ENCODE measurements at regions of chr1 and their contacts with region 1.

Region 1: GRCh38 chr1:112369392-112370285 is 26.4 kb upstream of the CTTNBP2NL start:
- DNase-seq: peak; percentile 90
- H3K4me3 Mint-ChIP-seq: no peak overlapping the region
- H3K27ac Mint-ChIP-seq: no peak overlapping the region
- H3K4me1 Mint-ChIP-seq: peaks cover 3% of the 10 kb centered on the region
- H3K27me3 Mint-ChIP-seq: peaks cover 30% of the 10 kb centered on the region

Region 2: GRCh38 chr1:112298558-112298957 is 71.1 kb before region 1 on chr1:
- CTCF ChIA-PET with region 1: interaction called, 21 read pairs
- POLR2A ChIA-PET with region 1: no interaction called
- intact Hi-C with region 1: loop called (anchors 2 kb)
- DNase-seq: peak; percentile 55
- H3K4me3 Mint-ChIP-seq: no peak overlapping the region
- H3K27ac Mint-ChIP-seq: no peak overlapping the region
- H3K4me1 Mint-ChIP-seq: no peaks in the 10 kb centered on the region
- H3K27me3 Mint-ChIP-seq: peaks cover 7% of the 10 kb centered on the region

Region 3: DNA sequence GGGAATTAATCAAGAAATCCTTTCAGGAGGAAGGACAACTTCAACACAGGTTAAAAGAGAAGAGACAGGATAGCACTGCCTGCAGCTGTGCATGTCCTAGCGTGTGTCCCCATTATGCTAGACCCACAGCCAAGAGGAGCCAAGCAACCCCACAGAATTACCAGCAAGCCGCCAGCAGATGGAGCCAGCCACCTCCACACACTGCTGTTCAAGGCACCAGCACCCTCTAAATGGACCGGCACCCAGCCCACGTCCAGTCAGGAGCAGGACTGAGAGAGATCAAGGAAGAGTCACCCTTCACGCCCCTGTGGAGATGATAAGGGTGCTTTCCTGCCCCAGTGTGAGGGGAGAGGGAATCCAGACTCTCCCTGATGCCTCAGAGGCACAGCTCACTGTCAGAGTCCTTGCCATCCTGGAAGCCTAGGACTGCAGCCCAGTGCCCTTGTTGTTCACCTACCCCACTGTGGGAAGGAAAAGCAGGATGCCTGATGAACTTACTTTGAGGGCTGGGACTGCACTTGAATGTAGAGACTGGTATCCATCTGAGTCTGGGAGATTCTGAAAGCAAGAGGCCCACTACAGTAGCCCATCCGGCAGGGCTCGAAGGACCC is 10.7 kb before region 1 on chr1:
- CTCF ChIA-PET with region 1: interaction called, 68 read pairs
- POLR2A ChIA-PET with region 1: no interaction called
- intact Hi-C with region 1: no loop called
- DNase-seq: peak; percentile 55
- H3K4me3 Mint-ChIP-seq: no peak overlapping the region
- H3K27ac Mint-ChIP-seq: no peak overlapping the region
- H3K4me1 Mint-ChIP-seq: no peaks in the 10 kb centered on the region
- H3K27me3 Mint-ChIP-seq: peaks cover 31% of the 10 kb centered on the region